Activated T-helper 2 cell treated with anti-CD3 and anti-CD28 coated beads, Interferon-gamma antibody, Interleukin-2, Interleukin-4, amounts not matched to agents 10 μg/mL and 5 μg/mL and 100 μg/mL, durations not matched to agents 14 hours and 24 hours and 36 hours (primary cell): ENCODE measurements at regions of chr14 and their contacts with region 1.

Region 1: DNA sequence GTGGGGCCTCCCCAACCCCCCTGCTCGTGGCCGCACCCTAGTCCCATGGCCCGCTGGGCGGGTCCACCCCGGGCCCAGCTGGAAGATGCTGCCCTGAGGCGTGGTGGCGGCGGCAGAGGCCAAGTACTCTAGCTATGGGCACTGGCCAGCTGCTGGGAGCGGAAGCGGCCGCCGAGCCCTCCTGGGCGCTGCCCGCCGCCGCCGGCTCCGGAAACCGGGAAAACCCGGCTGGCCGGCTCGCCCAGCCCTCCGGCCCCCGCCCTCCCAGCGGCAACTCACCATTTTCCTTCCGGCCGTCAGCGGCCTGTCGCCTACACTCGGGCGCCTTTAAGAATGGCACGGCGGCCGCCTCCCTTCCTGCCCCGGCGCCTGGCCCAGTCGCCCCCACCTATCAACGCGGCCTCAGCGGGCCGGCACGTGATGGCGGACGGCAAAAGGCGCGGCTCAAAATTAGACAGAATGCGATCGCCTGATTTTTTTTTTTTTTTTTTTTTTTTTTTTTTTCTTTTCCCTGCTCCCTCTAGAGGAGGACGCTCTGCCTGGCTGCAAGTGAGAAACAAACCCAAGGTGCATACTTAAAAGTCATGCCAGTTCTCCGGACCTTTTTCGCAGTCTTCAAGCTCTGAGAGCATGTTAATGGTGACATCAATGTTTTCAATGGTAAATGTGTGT is at the start of gene GMFB:
- DNase-seq: peak; percentile 83
- H3K4me3 Mint-ChIP-seq: peak within 1 kb of the TSS; percentile 92
- H3K27ac Mint-ChIP-seq: peak within 1 kb of the TSS; percentile 95
- H3K4me1 Mint-ChIP-seq: peaks cover 46% of the 10 kb centered on the region
- H3K27me3 Mint-ChIP-seq: no peaks in the 10 kb centered on the region
- total RNA-seq, gene GMFB: 36.3 and 40.0 TPM in 2 replicates

Region 2: GRCh38 chr14:54312140-54312801 is 176.5 kb before region 1 on chr14:
- intact Hi-C with region 1: no loop called
- DNase-seq: no peak
- H3K4me3 Mint-ChIP-seq: no peak overlapping the region
- H3K27ac Mint-ChIP-seq: no peak overlapping the region
- H3K4me1 Mint-ChIP-seq: no peaks in the 10 kb centered on the region
- H3K27me3 Mint-ChIP-seq: peaks cover 7% of the 10 kb centered on the region

Region 3: DNA sequence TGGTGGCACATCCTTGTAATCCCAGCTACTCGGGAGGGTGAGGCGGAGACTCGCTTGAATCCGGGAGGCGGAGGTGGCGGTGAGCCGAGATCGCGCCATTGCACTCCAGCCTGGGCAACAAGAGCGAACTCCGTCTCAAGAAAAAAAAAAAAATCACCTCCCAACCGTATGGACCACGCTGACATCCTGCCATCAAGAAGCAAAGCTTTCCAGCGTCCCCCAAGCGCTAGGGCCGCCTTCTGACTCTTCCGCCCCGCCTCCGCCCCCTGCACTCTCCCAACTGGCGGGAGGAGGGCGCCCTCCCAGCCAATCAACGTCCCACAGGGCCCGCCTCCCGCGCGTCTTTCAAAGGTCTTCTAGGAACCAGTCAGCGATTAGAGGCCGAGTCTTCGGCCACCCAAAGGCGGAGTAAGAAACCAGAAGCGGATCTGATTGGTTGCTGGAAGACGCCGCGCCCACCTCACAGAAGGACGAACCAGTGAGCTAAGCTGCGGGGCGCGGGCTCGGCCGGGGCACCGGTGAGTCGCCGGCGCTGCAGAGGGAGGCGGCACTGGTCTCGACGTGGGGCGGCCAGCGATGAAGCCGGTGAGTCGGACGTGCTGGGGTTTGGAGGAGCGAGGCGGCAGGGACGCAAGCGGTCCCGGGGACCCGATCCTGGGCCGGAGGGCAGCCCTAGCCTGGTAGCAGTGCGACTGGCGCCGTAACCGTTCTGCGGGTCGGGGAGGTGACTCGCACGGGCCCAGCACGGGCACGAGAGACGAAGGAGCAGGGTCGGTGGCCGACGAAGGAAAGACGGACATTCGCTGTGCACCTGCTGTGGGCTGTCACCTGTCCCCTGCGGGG is 92.1 kb before region 1 on chr14 and contains the start of gene CDKN3:
- intact Hi-C with region 1: loop called (anchors 2 kb)
- DNase-seq: peak; percentile 98
- H3K4me3 Mint-ChIP-seq: peak within 1 kb of the TSS; percentile 87
- H3K27ac Mint-ChIP-seq: peak within 1 kb of the TSS; percentile 81
- H3K4me1 Mint-ChIP-seq: peaks cover 26% of the 10 kb centered on the region
- H3K27me3 Mint-ChIP-seq: no peaks in the 10 kb centered on the region
- total RNA-seq, gene CDKN3: 53.4 and 57.5 TPM in 2 replicates

Region 4: DNA sequence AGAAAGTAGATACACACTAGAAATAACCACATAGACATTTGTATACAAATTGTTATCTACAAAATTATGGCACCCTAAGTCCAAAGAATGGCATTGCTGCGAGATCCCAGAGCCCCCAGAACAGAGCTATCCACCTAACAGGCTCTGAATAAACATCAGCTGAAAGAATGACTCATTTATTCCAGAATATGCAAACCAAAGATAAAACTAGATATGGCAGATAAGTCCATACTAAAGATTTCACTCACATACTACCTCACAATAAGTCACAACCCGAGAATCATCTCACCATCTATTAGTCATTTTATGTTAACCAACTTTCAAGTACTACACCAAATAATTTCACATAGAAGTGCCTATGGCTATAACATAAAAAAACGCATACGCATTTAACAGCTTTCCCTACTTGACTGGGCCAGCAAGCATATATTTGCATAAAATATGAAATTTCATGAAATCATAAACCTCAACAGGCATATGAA is 53.2 kb before region 1 on chr14:
- intact Hi-C with region 1: loop called (anchors 1 kb)
- DNase-seq: no peak
- H3K4me3 Mint-ChIP-seq: peak overlapping the region; percentile 70
- H3K27ac Mint-ChIP-seq: peak overlapping the region; percentile 95
- H3K4me1 Mint-ChIP-seq: peaks cover 71% of the 10 kb centered on the region
- H3K27me3 Mint-ChIP-seq: no peaks in the 10 kb centered on the region

Region 5: GRCh38 chr14:54440873-54441868 is 47.6 kb before region 1 on chr14 and contains the start of gene CNIH1:
- intact Hi-C with region 1: loop called (anchors 2 kb)
- DNase-seq: peak; percentile 90
- H3K4me3 Mint-ChIP-seq: peak within 1 kb of the TSS; percentile 95
- H3K27ac Mint-ChIP-seq: peak within 1 kb of the TSS; percentile 97
- H3K4me1 Mint-ChIP-seq: peaks cover 47% of the 10 kb centered on the region
- H3K27me3 Mint-ChIP-seq: peaks cover 5% of the 10 kb centered on the region
- total RNA-seq, gene CNIH1: 113 and 115 TPM in 2 replicates

Region 6: GRCh38 chr14:54509546-54510501 is 21.0 kb after region 1 on chr14 and contains the start of gene CGRRF1:
- intact Hi-C with region 1: loop called (anchors 1 kb)
- DNase-seq: peak; percentile 94
- H3K4me3 Mint-ChIP-seq: peak within 1 kb of the TSS; percentile 88
- H3K27ac Mint-ChIP-seq: peak within 1 kb of the TSS; percentile 67
- H3K4me1 Mint-ChIP-seq: peaks cover 25% of the 10 kb centered on the region
- H3K27me3 Mint-ChIP-seq: peaks cover 6% of the 10 kb centered on the region
- total RNA-seq, gene CGRRF1: 6.2 and 9.1 TPM in 2 replicates

Region 7: GRCh38 chr14:54529811-54530210 is 41.0 kb after region 1 on chr14:
- intact Hi-C with region 1: no loop called
- DNase-seq: no peak
- H3K4me3 Mint-ChIP-seq: no peak overlapping the region
- H3K27ac Mint-ChIP-seq: no peak overlapping the region
- H3K4me1 Mint-ChIP-seq: peaks cover 7% of the 10 kb centered on the region
- H3K27me3 Mint-ChIP-seq: no peaks in the 10 kb centered on the region